ENCODE measurements at regions of chr22 and their contacts with region 1.

Region 1: DNA sequence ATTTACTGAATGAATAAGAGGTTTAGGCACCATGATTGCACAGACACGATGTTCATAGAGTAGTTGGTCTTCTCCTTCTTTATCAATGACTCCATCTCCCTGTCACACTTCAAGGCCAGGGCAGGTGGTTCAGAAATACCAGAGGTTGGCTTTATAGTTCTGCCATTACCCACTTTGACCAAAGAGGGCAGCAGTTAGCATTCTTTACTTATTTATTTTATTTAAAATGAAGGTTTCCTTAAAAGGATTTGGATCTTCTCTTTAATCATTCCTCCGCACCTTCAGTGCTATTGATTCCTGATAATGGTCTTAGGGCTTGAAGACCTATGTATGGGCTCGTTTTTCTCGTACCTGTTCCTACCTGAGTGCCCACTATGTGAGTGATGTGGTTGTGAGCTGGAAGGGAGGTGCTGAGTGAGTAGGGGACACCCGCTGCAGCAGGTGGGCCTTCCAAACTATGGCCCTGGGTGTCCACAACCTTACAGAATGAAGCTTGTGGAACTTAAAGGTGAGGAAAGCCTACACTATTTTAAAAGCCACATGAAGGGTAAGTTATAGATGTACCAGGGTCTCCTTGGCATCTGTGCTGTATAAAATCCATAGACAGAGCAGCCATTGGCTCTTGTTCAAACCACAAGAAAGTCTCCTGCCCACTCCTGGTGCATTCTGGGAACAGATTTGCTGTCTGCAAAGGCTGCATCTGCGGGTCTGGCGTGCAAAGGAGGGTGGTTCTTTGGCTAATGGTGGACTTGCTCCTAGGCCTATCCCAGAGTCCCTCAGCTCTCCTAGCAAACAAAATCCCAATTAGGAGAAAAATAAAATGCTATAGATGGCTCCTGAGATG is 35.0 kb downstream of the TIMP3 start:
- DNase-seq: no peak
- H3K4me3 ChIP-seq: no peak overlapping the region
- H3K27ac ChIP-seq: no peak overlapping the region
- H3K4me1 ChIP-seq: no peaks in the 10 kb centered on the region
- H3K27me3 ChIP-seq: no peaks in the 10 kb centered on the region
- CTCF ChIP-seq: peak; percentile 42 to 48

Region 2: GRCh38 chr22:32887324-32887980 is 51.0 kb after region 1 on chr22:
- CTCF ChIA-PET with region 1: no interaction called
- dilution Hi-C with region 1: loop called (anchors 5 kb)
- in situ Hi-C with region 1: no loop called
- intact Hi-C with region 1: no loop called
- DNase-seq: no peak
- H3K4me3 ChIP-seq: no peak overlapping the region
- H3K27ac ChIP-seq: no peak overlapping the region
- H3K4me1 ChIP-seq: no peaks in the 10 kb centered on the region
- H3K27me3 ChIP-seq: no peaks in the 10 kb centered on the region
- CTCF ChIP-seq: no peak

Region 3: DNA sequence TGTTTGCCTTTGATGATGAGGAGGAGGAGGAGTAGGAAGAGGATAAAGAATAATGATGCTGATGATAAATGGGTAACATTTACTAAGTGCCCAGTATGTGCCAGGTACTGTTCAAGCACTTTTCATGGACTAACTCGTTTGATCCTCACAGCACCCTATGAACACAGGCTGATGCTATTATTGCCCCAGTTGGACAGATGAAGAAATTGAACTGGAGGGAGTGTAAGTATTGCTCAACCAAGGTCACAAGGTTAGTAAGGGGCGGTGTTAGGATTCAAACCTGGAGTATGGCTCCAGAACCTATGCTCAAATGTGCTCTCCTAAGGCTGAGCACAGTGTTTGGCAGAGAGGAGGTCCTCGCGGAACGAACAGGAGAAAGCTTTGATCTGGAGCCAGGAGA is 143.1 kb after region 1 on chr22:
- CTCF ChIA-PET with region 1: no interaction called
- dilution Hi-C with region 1: loop called (anchors 5 kb)
- in situ Hi-C with region 1: no loop called
- intact Hi-C with region 1: no loop called
- DNase-seq: no peak
- H3K4me3 ChIP-seq: no peak overlapping the region
- H3K27ac ChIP-seq: no peak overlapping the region
- H3K4me1 ChIP-seq: no peaks in the 10 kb centered on the region
- H3K27me3 ChIP-seq: no peaks in the 10 kb centered on the region
- CTCF ChIP-seq: no peak